Uterus (tissue), 4 donors: ENCODE measurements at regions of chr5 and their contacts with region 1.

Region 1: GRCh38 chr5:171913987-171914273 is 92.5 kb downstream of the FBXW11 start:
- DNase-seq: no peak
- H3K4me3 ChIP-seq: no peak overlapping the region
- H3K27ac ChIP-seq: no peak overlapping the region
- H3K4me1 ChIP-seq: no peaks in the 10 kb centered on the region
- H3K27me3 ChIP-seq: no peaks in the 10 kb centered on the region
- CTCF ChIP-seq: no peak
- POLR2A ChIP-seq: no peak

Region 2: DNA sequence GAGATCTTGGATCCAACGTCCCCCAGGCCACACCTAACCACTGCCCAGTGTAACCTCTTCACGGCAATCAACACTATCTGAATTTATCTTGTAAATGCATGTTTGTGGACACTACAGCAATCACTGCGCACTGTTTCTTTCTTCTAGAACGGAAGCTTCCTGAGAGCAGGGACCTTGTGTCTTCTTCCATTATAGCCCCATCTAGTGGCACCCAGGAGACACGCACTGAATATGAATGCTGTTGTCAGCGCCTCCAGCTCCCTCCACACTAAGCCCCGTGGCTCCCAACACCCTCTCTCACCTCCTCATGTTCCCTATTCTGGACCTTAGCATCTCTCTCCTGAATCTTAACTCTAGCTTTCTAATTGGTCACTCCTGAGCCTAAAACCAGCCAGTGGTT is 55.6 kb before region 1 on chr5:
- intact Hi-C with region 1: no loop called
- DNase-seq: no peak
- H3K4me3 ChIP-seq: no peak overlapping the region
- H3K27ac ChIP-seq: no peak overlapping the region
- H3K4me1 ChIP-seq: no peaks in the 10 kb centered on the region
- H3K27me3 ChIP-seq: no peaks in the 10 kb centered on the region
- CTCF ChIP-seq: no peak
- POLR2A ChIP-seq: no peak

Region 3: DNA sequence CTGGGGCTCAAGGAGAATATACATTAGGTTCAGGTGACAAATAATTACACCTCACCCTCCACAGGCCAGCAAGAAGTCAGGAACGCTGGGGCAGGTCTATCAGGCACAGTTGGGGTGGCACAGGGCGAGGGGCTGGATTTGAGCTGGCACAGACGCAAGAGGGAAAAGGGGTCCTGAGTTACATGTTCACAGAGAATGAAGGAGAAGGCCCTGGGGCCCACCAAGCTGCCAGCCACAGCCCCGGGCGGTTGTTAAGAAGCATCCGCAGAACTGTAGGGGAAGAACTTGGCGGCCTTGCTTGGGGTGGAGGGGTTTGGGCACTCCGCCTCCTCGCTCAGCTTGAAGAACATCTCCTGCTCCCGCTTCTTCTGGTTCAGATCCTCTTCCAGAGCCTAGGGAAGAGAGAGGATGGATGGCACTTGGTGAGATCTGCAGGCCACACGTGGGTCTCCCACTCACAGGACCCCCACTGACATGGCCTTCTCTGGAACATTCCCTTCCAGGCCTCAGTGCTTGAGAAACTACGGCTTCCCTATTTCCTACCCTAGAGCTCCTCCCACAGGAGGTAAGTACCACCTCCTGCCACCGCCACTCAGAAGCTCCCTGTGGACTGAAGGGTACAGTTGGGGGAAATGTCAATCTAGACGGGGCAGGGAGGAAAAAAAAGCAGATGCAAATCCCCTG is 130.8 kb after region 1 on chr5:
- intact Hi-C with region 1: loop called (anchors 10 kb)
- DNase-seq: no peak
- H3K4me3 ChIP-seq: no peak overlapping the region
- H3K27ac ChIP-seq: no peak overlapping the region
- H3K4me1 ChIP-seq: no peaks in the 10 kb centered on the region
- H3K27me3 ChIP-seq: no peaks in the 10 kb centered on the region
- CTCF ChIP-seq: no peak
- POLR2A ChIP-seq: no peak